Posterior cingulate gyrus (tissue), 11 donors: ENCODE measurements at regions of chr1 and their contacts with region 1.

Region 1: DNA sequence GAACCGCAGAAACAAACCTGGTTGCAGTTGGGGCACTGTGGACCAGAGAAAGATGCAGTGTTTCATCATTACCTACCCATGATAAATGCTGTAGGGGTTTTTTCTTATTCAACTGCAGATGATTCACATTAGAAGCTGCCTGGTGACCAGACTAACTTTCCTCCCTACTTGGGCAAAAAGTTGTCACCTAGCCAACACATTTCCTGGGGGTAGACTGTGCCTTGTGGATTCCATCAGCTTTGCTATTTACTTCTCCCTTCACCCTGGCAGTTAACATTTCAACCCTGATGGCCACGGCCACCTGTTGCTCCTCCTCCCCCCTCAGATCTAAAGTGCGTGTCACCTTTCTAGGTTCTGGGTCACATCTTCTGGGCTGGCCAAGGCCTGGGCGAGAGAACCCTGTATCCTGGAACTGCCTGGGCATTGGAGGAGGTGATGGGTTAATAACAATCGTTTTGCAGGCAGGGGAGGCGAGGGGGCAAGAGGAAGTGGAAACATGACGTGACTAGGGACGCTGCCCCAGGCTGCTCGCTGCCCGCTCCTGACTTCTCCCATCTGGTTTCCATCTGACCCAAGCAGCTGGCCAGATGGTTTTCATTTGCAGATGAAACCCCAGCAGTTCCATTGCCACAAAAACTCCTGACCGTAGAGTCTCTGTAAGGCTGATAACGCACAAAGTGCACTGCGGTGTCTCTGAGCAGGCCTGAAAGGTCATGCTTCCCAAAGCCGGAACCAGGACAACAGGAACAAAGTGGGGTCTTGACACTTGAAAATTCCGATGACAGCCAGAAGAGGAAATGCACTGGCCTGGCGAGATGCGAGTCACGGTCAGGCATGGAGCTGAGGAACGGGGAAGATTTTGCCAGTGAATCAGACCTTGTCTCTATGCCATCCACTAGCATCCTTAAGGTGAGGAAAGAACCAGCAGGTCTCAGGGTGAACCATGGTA is 36.6 kb downstream of the CAPZB start:
- DNase-seq: peak in 1 of 10 donors; percentile 86

Region 2: GRCh38 chr1:19390901-19391595 is 57.7 kb before region 1 on chr1:
- intact Hi-C with region 1: loop called (anchors 5 kb)
- DNase-seq: peak in 7 of 10 donors; percentile 34 to 90 (median 50)